Activated CD4-positive, alpha-beta T cell treated with anti-CD3 and anti-CD28 coated beads for 36 hours (primary cell): ENCODE measurements at regions of chr1 and their contacts with region 1.

Region 1: DNA sequence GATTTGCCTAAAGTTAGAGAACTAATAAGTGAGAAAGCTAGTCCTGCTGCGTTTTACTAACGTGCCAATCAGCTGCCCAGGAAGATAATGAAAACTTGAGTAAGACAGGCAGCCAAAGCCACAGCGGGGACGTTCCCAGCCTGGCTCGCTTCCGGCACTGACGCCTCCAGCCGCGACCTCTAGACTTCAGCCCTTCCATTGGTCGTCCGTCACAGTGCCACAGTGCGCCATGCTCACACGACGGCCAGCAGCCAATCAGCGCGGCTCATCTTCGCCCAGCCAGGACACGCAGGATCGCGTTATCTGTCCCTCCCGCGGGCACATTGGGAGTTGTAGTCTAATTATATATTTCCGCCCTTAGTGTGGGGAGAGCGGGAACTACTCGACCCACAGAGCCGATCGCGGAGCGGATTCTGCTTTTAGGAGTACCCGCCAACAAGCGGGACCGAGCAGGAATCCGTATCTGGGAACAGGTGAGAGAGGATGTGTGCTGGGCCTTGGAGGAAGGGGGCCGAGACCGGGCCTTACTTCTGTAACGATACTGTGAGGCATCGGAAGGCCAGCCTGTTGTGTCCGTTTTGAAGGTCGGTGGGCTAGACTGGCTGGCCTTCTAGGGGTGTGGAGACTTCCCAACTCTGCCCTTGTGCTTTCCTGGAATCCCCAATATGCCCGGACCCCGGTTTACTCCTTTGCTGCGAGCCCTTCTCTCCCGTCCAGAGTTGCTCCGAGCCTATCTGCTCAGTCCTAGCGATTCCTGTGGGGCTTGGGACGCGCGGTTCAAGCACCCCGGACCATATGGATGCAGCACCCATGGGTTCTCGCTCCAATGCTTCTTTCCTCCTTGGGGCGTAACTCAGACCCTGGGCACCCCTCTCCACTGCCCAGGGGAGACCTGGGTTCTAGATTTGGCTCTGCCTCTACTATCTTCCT is at the start of gene FDPS:
- DNase-seq: peak; percentile 99
- ATAC-seq: peak; percentile 99
- H3K4me3 Mint-ChIP-seq: peak within 1 kb of the TSS; percentile 88
- H3K27ac Mint-ChIP-seq: peak within 1 kb of the TSS; percentile 98
- H3K4me1 Mint-ChIP-seq: peaks cover 34% of the 10 kb centered on the region
- H3K27me3 Mint-ChIP-seq: no peaks in the 10 kb centered on the region
- total RNA-seq, gene FDPS: 255 to 354 TPM

Region 2: GRCh38 chr1:154974063-154974807 is 334.5 kb before region 1 on chr1 and contains the start of gene CKS1B:
- CTCF ChIA-PET with region 1: no interaction called
- POLR2A ChIA-PET with region 1: no interaction called
- intact Hi-C with region 1: loop called in 1 of 2 experiments (anchors 1 kb)
- DNase-seq: peak; percentile 98
- ATAC-seq: peak; percentile 86
- H3K4me3 Mint-ChIP-seq: no peak within 1 kb of the TSS
- H3K27ac Mint-ChIP-seq: no peak within 1 kb of the TSS
- H3K4me1 Mint-ChIP-seq: peaks cover 30% of the 10 kb centered on the region
- H3K27me3 Mint-ChIP-seq: no peaks in the 10 kb centered on the region
- total RNA-seq, gene CKS1B: 190 to 196 TPM

Region 3: GRCh38 chr1:155208541-155209311 is 100.0 kb before region 1 on chr1 and contains the start of gene MTX1:
- CTCF ChIA-PET with region 1: interaction called, 4 read pairs
- POLR2A ChIA-PET with region 1: no interaction called
- intact Hi-C with region 1: loop called in 1 of 2 experiments (anchors 2 kb)
- DNase-seq: peak; percentile 93
- ATAC-seq: peak; percentile 87
- H3K4me3 Mint-ChIP-seq: peak within 1 kb of the TSS; percentile 89
- H3K27ac Mint-ChIP-seq: peak within 1 kb of the TSS; percentile 86
- H3K4me1 Mint-ChIP-seq: peaks cover 29% of the 10 kb centered on the region
- H3K27me3 Mint-ChIP-seq: no peaks in the 10 kb centered on the region
- total RNA-seq, gene MTX1: 52.8 to 52.9 TPM

Region 4: GRCh38 chr1:155261852-155262673 is 46.7 kb before region 1 on chr1 and contains the start of gene SCAMP3:
- CTCF ChIA-PET with region 1: interaction called, 5 read pairs
- POLR2A ChIA-PET with region 1: interaction called, 3 read pairs
- intact Hi-C with region 1: loop called (anchors 1 to 5 kb)
- DNase-seq: peak; percentile 93
- ATAC-seq: peak; percentile 95
- H3K4me3 Mint-ChIP-seq: peak within 1 kb of the TSS; percentile 98
- H3K27ac Mint-ChIP-seq: peak within 1 kb of the TSS; percentile 91
- H3K4me1 Mint-ChIP-seq: peaks cover 27% of the 10 kb centered on the region
- H3K27me3 Mint-ChIP-seq: no peaks in the 10 kb centered on the region
- total RNA-seq, gene SCAMP3: 82.0 to 95.5 TPM

Region 5: DNA sequence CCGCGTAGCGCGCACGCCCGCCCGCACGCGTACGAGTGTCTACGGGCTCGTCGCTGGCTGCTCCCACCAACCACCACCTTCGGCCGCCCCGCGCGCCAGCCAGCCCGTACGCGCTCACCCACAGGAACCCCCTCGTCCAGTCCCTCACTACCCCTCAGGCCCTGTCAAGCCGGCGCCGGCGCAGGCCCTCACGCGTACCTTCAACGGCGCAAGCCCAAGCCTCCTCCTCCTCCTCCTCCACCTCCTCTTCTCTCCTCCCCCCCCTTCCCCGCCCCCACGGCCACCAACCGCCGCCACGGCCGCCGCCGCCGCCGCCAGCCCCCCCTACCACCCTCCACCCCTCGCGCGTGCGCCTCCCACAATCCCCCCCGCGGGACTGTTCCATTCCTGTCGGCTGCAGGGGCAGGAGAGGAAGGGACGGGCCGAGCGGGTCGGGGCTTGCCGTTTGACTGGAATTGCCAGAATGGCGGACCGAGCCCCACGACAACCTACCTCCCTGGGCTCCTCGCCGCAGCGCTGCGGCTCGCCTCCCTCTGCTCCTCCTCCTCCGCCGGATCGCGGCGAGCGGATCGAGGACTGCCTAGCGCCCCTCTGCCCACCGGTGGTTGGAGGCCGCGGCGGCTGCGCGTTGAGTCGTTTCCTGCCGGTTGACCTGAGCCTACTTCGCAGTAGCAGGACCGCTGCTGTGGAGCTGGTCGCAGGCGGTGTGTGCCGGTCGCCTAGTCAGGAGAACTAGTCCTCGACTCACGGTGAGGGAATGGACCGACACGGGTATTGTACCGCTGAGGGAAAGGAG is 254.0 kb after region 1 on chr1 and contains the start of gene ASH1L:
- CTCF ChIA-PET with region 1: no interaction called
- POLR2A ChIA-PET with region 1: no interaction called
- intact Hi-C with region 1: loop called in 1 of 2 experiments (anchors 1 kb)
- DNase-seq: peak; percentile 96
- ATAC-seq: peak; percentile 83
- H3K4me3 Mint-ChIP-seq: peak within 1 kb of the TSS; percentile 90
- H3K27ac Mint-ChIP-seq: peak within 1 kb of the TSS; percentile 99
- H3K4me1 Mint-ChIP-seq: peaks cover 46% of the 10 kb centered on the region
- H3K27me3 Mint-ChIP-seq: no peaks in the 10 kb centered on the region
- total RNA-seq, gene ASH1L: 28.1 to 31.4 TPM

Region 6: GRCh38 chr1:156054500-156055280 is 745.9 kb after region 1 on chr1 and contains the start of gene LAMTOR2:
- CTCF ChIA-PET with region 1: no interaction called
- POLR2A ChIA-PET with region 1: no interaction called
- intact Hi-C with region 1: loop called in 1 of 2 experiments (anchors 1 kb)
- DNase-seq: peak; percentile 98
- ATAC-seq: peak; percentile 82
- H3K4me3 Mint-ChIP-seq: peak within 1 kb of the TSS; percentile 92
- H3K27ac Mint-ChIP-seq: peak within 1 kb of the TSS; percentile 88
- H3K4me1 Mint-ChIP-seq: peaks cover 18% of the 10 kb centered on the region
- H3K27me3 Mint-ChIP-seq: no peaks in the 10 kb centered on the region
- total RNA-seq, gene LAMTOR2: 26.1 to 50.3 TPM